Caco-2 (cell line): ENCODE measurements at regions of chr1 and their contacts with region 1.

Region 1: GRCh38 chr1:236083650-236084385 is 18.9 kb upstream of the NID1 start:
- DNase-seq: peak; percentile 63 to 68
- H3K4me3 ChIP-seq: peak overlapping the region; percentile 13
- H3K4me3 Mint-ChIP-seq: peak overlapping the region; percentile 65
- H3K27ac Mint-ChIP-seq: peak overlapping the region; percentile 54
- H3K4me1 ChIP-seq: peaks cover 21% of the 10 kb centered on the region
- H3K4me1 Mint-ChIP-seq: peaks cover 19% of the 10 kb centered on the region
- H3K27me3 ChIP-seq: no peaks in the 10 kb centered on the region
- H3K27me3 Mint-ChIP-seq: no peaks in the 10 kb centered on the region
- CTCF ChIP-seq: no peak

Region 2: GRCh38 chr1:236002025-236002390 is 81.8 kb before region 1 on chr1:
- CTCF ChIA-PET with region 1: no interaction called
- POLR2A ChIA-PET with region 1: no interaction called
- intact Hi-C with region 1: loop called (anchors 5 kb)
- DNase-seq: no peak
- H3K4me3 ChIP-seq: no peak overlapping the region
- H3K4me3 Mint-ChIP-seq: no peak overlapping the region
- H3K27ac Mint-ChIP-seq: peak overlapping the region; percentile 85
- H3K4me1 ChIP-seq: peaks cover 18% of the 10 kb centered on the region
- H3K4me1 Mint-ChIP-seq: peaks cover 18% of the 10 kb centered on the region
- H3K27me3 ChIP-seq: no peaks in the 10 kb centered on the region
- H3K27me3 Mint-ChIP-seq: no peaks in the 10 kb centered on the region
- CTCF ChIP-seq: no peak

Region 3: DNA sequence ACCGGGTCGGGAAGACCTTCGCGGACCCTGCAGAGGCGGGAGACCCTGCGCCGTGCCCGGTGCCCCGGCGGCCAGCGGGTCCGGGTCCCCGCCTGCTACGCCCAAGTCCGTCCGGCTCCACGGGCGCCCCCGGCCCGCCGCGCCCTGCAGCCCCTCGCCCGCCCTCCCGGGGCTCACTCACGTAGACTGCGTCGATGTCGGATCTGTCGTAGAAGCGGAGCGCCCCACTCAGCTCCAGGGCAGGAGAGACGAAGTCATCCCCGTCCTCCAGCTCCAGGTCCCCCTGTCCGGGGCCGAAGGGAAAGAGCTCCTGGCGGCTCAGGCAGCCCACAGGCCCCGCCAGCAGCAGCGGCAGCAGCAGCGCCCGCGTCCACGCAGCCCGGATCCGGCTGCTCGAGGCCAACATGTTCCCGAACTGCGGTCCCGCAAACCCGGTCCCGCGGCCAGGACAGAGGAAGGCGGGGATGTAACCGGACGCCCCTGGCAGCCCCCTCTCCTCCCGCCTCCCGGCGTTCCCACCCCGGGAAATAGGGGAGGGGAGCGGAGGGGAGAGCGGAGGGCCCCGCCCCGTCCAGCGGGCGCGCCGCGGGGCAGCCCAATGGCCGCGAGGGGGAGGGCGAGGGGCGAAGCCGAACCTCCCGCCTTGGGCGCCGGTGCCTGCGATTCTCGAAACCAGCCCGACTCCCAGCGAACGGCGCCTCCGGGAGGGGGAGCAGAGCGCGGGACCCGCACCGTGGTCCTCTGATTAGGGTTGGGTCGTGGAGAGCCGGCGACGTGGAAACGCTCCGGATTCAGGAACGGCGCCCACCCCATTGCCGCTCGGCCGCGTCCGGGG is 18.9 kb before region 1 on chr1 and contains the start of gene NID1:
- CTCF ChIA-PET with region 1: no interaction called
- POLR2A ChIA-PET with region 1: no interaction called
- intact Hi-C with region 1: loop called (anchors 2 kb)
- DNase-seq: peak; percentile 61 to 80
- H3K4me3 ChIP-seq: peak within 1 kb of the TSS; percentile 37
- H3K4me3 Mint-ChIP-seq: peak within 1 kb of the TSS; percentile 69
- H3K27ac Mint-ChIP-seq: no peak within 1 kb of the TSS
- H3K4me1 ChIP-seq: no peaks in the 10 kb centered on the region
- H3K4me1 Mint-ChIP-seq: no peaks in the 10 kb centered on the region
- H3K27me3 ChIP-seq: no peaks in the 10 kb centered on the region
- H3K27me3 Mint-ChIP-seq: no peaks in the 10 kb centered on the region
- CTCF ChIP-seq: no peak
- total RNA-seq, gene NID1: 43.7 and 48.5 TPM in 2 replicates